Right lobe of liver (tissue), 6 donors: ENCODE measurements at regions of chr15 and their contacts with region 1.

Region 1: DNA sequence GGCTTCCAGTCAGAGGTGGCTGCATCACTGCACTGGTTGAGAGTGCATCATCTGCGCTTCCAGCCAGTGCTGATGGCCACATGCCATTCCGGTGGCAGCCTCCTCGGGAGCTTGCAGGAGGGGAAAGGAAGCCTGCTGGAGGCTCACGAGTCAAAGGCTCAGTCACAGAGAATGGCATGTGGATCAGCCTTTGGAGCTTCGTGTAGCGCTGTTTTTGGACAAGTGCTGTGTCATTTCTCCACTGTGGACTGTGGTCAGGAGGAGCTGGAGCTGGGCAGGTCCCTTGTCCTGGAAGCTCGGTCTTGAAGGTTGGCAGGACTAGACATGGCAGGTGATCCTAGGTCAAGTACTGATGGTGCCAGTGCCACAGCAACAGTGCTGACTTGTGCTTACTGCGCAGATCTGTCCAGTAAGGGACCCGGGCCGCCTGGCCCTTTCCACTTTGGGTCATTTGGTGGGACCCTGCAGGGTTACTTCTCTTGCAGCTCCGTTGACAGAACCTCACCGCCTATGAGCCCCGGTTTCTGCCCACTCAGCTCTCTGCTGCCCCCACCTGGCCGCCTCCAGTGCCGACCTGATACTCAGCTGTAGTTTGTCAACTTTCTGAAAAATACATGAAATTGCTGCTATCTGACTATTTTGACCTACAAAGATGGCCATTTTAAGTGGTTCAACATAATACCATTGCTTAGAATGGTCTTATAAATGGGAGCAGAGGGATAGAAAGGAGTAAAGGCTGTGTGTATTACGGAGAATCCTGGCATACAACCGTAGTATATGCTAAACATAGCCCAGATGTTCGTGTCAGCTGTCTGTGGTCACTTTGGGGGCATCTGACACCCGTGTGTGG is 27.6 kb upstream of the TRPM1 start:
- DNase-seq: peak; percentile 82 to 87 (median 83)
- ATAC-seq: peak; percentile 94 to 97 (median 95)
- H3K4me3 ChIP-seq: peak overlapping the region in 2 of 3 donors; percentile 7 to 35
- H3K27ac ChIP-seq: no peak overlapping the region
- H3K4me1 ChIP-seq: peaks cover 0 to 5% (median 0%) of the 10 kb centered on the region in 4 donors
- H3K27me3 ChIP-seq: no peaks in the 10 kb centered on the region
- CTCF ChIP-seq: peak; percentile 86 to 95 (median 90)
- POLR2A ChIP-seq: no peak

Region 2: DNA sequence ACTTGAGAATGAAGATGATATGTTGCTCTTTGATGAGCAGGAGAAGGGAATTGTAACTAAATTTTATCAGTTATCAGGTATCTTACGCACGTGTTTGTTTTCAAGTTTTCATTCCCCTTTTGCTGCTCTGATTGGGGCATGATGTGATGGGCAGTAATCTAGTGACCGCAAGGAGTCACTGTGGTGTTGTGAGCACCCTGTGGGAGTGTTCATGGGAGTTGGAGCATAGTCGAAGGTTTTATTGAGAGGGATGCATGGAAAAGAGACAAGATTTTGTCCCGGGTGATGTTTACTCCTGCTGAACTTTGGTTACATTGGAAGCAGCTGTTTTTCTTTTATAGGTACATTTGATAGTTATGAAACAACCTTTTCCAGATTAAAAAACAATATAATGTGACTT is 223.3 kb before region 1 on chr15:
- intact Hi-C with region 1: loop called in 1 of 2 experiments (anchors 5 kb)
- DNase-seq: peak in 1 of 3 donors; percentile 67
- ATAC-seq: peak; percentile 53 to 80 (median 68)
- H3K4me3 ChIP-seq: no peak overlapping the region
- H3K27ac ChIP-seq: peak overlapping the region in 2 of 3 donors; percentile 43 to 75
- H3K4me1 ChIP-seq: peaks cover 0 to 15% (median 0%) of the 10 kb centered on the region in 4 donors
- H3K27me3 ChIP-seq: no peaks in the 10 kb centered on the region
- CTCF ChIP-seq: peak; percentile 33 to 63 (median 54)
- POLR2A ChIP-seq: no peak